CD8-positive, alpha-beta memory T cell (primary cell): ENCODE measurements at regions of chr2 and their contacts with region 1.

Region 1: DNA sequence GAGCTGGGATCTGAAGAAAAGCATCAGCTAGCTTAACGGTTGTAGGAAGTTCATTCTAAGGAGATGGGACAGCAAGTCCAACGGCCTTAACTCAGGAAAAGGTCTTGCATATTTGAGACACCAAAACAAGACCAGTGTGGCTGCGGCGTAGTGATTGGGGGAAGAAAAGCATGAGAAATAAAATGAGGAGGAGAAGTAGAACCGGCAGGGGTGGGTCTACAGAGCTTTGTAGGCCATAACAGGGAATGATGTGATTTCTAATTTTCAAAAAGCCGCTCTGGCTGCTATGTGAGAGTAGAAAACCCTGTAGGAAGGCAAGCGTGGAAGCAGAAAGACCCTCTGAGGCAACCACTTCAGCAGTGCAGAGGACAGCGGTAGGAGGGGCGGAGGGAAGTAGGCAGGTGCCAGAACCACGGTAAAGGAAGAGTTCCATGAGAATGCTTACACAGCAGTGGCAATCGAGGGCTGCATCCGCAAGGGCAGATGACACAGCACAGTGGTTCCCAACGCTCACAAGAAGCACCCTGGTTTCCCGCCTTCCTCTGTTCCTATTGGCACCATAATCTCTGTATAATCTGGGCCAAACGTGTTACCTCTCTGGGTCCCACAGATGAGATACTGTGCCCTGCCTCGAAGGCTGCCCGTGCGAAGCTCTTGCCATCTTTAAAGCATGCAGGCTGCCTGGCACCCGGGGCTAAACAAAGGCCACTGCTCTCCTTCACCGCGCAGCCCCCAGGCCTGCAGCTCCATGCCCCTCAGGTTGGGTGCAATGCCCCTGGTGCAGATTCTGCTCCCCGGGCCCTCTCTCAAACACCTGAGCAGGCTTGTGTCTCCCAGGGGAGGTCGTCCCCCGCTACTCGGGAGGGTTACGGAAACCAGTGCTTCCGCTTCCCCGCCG is 791 bp downstream of the ANKRD39 start:
- DNase-seq: peak in 2 of 5 donors; percentile 18 to 38
- H3K4me3 ChIP-seq: peak overlapping the region; percentile 92
- H3K4me3 Mint-ChIP-seq: peak overlapping the region; percentile 79 to 94 (median 92)
- H3K27ac ChIP-seq: peak overlapping the region; percentile 58
- H3K27ac Mint-ChIP-seq: peak overlapping the region; percentile 8 to 92 (median 87)
- H3K4me1 ChIP-seq: peaks cover 32% of the 10 kb centered on the region
- H3K4me1 Mint-ChIP-seq: peaks cover 27 to 61% (median 51%) of the 10 kb centered on the region in 3 donors
- H3K27me3 ChIP-seq: no peaks in the 10 kb centered on the region
- H3K27me3 Mint-ChIP-seq: no peaks in the 10 kb centered on the region

Region 2: GRCh38 chr2:96260404-96261260 is 596.4 kb before region 1 on chr2:
- CTCF ChIA-PET with region 1: no interaction called
- POLR2A ChIA-PET with region 1: no interaction called
- DNase-seq: peak in 1 of 5 donors; percentile 29
- H3K4me3 ChIP-seq: no peak overlapping the region
- H3K4me3 Mint-ChIP-seq: peak overlapping the region in 4 of 7 donors; percentile 2 to 24 (median 6)
- H3K27ac ChIP-seq: no peak overlapping the region
- H3K27ac Mint-ChIP-seq: peak overlapping the region in 7 of 8 donors; percentile 48 to 85 (median 64)
- H3K4me1 ChIP-seq: peaks cover 53% of the 10 kb centered on the region
- H3K4me1 Mint-ChIP-seq: peaks cover 55 to 84% (median 74%) of the 10 kb centered on the region in 3 donors
- H3K27me3 ChIP-seq: no peaks in the 10 kb centered on the region
- H3K27me3 Mint-ChIP-seq: no peaks in the 10 kb centered on the region

Region 3: GRCh38 chr2:96801005-96801785 is 55.8 kb before region 1 on chr2:
- CTCF ChIA-PET with region 1: interaction called, 11 read pairs
- POLR2A ChIA-PET with region 1: no interaction called
- DNase-seq: peak; percentile 54 to 79 (median 59)
- H3K4me3 ChIP-seq: no peak overlapping the region
- H3K4me3 Mint-ChIP-seq: no peak overlapping the region
- H3K27ac ChIP-seq: no peak overlapping the region
- H3K27ac Mint-ChIP-seq: no peak overlapping the region
- H3K4me1 ChIP-seq: peaks cover 27% of the 10 kb centered on the region
- H3K4me1 Mint-ChIP-seq: peaks cover 3 to 10% (median 7%) of the 10 kb centered on the region in 3 donors
- H3K27me3 ChIP-seq: no peaks in the 10 kb centered on the region
- H3K27me3 Mint-ChIP-seq: no peaks in the 10 kb centered on the region

Region 4: GRCh38 chr2:96839293-96839874 is 17.6 kb before region 1 on chr2:
- CTCF ChIA-PET with region 1: interaction called, 24 read pairs
- POLR2A ChIA-PET with region 1: interaction called, 9 read pairs
- DNase-seq: peak; percentile 71 to 88 (median 84)
- H3K4me3 ChIP-seq: peak overlapping the region; percentile 53
- H3K4me3 Mint-ChIP-seq: peak overlapping the region in 6 of 7 donors; percentile 63 to 86 (median 76)
- H3K27ac ChIP-seq: no peak overlapping the region
- H3K27ac Mint-ChIP-seq: peak overlapping the region; percentile 73 to 95 (median 89)
- H3K4me1 ChIP-seq: peaks cover 17% of the 10 kb centered on the region
- H3K4me1 Mint-ChIP-seq: peaks cover 13 to 37% (median 17%) of the 10 kb centered on the region in 3 donors
- H3K27me3 ChIP-seq: no peaks in the 10 kb centered on the region
- H3K27me3 Mint-ChIP-seq: no peaks in the 10 kb centered on the region

Region 5: GRCh38 chr2:96874118-96874831 is 17.2 kb after region 1 on chr2:
- CTCF ChIA-PET with region 1: interaction called, 88 read pairs
- POLR2A ChIA-PET with region 1: interaction called, 11 read pairs
- DNase-seq: no peak
- H3K4me3 ChIP-seq: no peak overlapping the region
- H3K4me3 Mint-ChIP-seq: peak overlapping the region in 1 of 7 donors; percentile 43
- H3K27ac ChIP-seq: no peak overlapping the region
- H3K27ac Mint-ChIP-seq: peak overlapping the region; percentile 19 to 95 (median 58)
- H3K4me1 ChIP-seq: peaks cover 29% of the 10 kb centered on the region
- H3K4me1 Mint-ChIP-seq: peaks cover 26 to 58% (median 31%) of the 10 kb centered on the region in 3 donors
- H3K27me3 ChIP-seq: no peaks in the 10 kb centered on the region
- H3K27me3 Mint-ChIP-seq: no peaks in the 10 kb centered on the region

Region 6: GRCh38 chr2:96923810-96924774 is 67.1 kb after region 1 on chr2:
- CTCF ChIA-PET with region 1: interaction called, 27 read pairs
- POLR2A ChIA-PET with region 1: interaction called, 8 read pairs
- DNase-seq: peak; percentile 11 to 70 (median 50)
- H3K4me3 ChIP-seq: peak overlapping the region; percentile 71
- H3K4me3 Mint-ChIP-seq: peak overlapping the region; percentile 81 to 93 (median 88)
- H3K27ac ChIP-seq: peak overlapping the region; percentile 60
- H3K27ac Mint-ChIP-seq: peak overlapping the region; percentile 67 to 98 (median 95)
- H3K4me1 ChIP-seq: peaks cover 34% of the 10 kb centered on the region
- H3K4me1 Mint-ChIP-seq: peaks cover 28 to 46% (median 37%) of the 10 kb centered on the region in 3 donors
- H3K27me3 ChIP-seq: no peaks in the 10 kb centered on the region
- H3K27me3 Mint-ChIP-seq: no peaks in the 10 kb centered on the region

Region 7: GRCh38 chr2:96940001-96940615 is 83.1 kb after region 1 on chr2:
- CTCF ChIA-PET with region 1: interaction called, 358 read pairs
- POLR2A ChIA-PET with region 1: no interaction called
- DNase-seq: peak in 1 of 5 donors; percentile 35
- H3K4me3 ChIP-seq: no peak overlapping the region
- H3K4me3 Mint-ChIP-seq: peak overlapping the region in 5 of 7 donors; percentile 1 to 70 (median 66)
- H3K27ac ChIP-seq: no peak overlapping the region
- H3K27ac Mint-ChIP-seq: peak overlapping the region in 1 of 8 donors; percentile 62
- H3K4me1 ChIP-seq: peaks cover 29% of the 10 kb centered on the region
- H3K4me1 Mint-ChIP-seq: peaks cover 24 to 36% (median 33%) of the 10 kb centered on the region in 3 donors
- H3K27me3 ChIP-seq: no peaks in the 10 kb centered on the region
- H3K27me3 Mint-ChIP-seq: peaks cover 0 to 2% of the 10 kb centered on the region in 2 donors

Region 8: DNA sequence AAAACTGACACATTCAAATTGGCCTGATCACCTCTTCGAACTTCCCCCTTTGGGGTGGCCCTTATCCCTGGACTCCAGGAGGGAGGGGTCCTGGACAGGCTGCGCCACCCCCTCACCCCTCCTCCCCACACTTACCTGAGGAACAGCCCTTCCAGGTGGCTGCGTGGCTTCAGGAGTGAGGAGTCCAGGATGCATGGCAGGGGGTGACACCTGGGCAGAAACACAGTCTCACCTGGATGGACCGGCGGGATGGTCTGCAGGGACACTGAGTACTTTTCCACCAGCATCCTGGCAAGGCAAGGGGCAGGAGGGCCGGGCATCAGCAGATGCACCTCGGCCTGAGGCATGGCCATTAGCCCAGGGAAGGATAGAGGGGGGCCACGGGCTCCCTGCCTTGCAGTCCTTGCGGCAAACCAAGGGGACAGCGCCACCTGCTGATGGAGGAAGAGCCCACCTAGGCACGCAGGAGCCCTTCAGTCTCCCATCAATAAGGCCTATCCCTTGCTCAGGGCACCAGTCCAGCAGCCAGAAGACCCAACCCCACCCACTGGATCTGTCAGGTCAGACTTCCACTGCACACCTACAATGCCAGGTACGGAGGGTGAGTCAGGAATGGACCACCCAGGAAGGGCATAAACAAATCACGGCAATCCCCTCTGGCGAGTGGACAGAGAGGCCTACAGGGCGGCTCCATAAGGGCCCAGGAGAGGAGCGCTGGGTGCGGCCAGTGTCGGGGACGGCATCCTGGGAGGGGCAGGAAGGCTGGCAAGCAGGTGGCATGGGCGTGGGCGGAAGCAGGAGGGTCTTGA is 103.3 kb after region 1 on chr2:
- CTCF ChIA-PET with region 1: interaction called, 358 read pairs
- POLR2A ChIA-PET with region 1: interaction called, 32 read pairs
- DNase-seq: peak; percentile 70 to 88 (median 75)
- H3K4me3 ChIP-seq: no peak overlapping the region
- H3K4me3 Mint-ChIP-seq: peak overlapping the region; percentile 33 to 90 (median 43)
- H3K27ac ChIP-seq: no peak overlapping the region
- H3K27ac Mint-ChIP-seq: peak overlapping the region; percentile 64 to 95 (median 87)
- H3K4me1 ChIP-seq: peaks cover 52% of the 10 kb centered on the region
- H3K4me1 Mint-ChIP-seq: peaks cover 47 to 52% (median 50%) of the 10 kb centered on the region in 3 donors
- H3K27me3 ChIP-seq: no peaks in the 10 kb centered on the region
- H3K27me3 Mint-ChIP-seq: no peaks in the 10 kb centered on the region